ENCODE measurements at regions of chr17 and their contacts with region 1.

Region 1: GRCh38 chr17:42541041-42541833 is 5.2 kb downstream of the NAGLU start:
- DNase-seq: peak; percentile 64
- ATAC-seq: peak; percentile 37
- H3K4me3 Mint-ChIP-seq: peak overlapping the region; percentile 78
- H3K27ac Mint-ChIP-seq: peak overlapping the region; percentile 88
- H3K4me1 Mint-ChIP-seq: peaks cover 32% of the 10 kb centered on the region
- H3K27me3 Mint-ChIP-seq: no peaks in the 10 kb centered on the region

Region 2: GRCh38 chr17:42566883-42567573 is 25.8 kb after region 1 on chr17 and contains the start of gene MLX:
- POLR2A ChIA-PET with region 1: interaction called, 13 read pairs
- DNase-seq: peak; percentile 96
- ATAC-seq: peak; percentile 74
- H3K4me3 Mint-ChIP-seq: peak within 1 kb of the TSS; percentile 97
- H3K27ac Mint-ChIP-seq: peak within 1 kb of the TSS; percentile 98
- H3K4me1 Mint-ChIP-seq: peaks cover 35% of the 10 kb centered on the region
- H3K27me3 Mint-ChIP-seq: no peaks in the 10 kb centered on the region
- total RNA-seq, gene MLX: 62.9 to 64.9 TPM

Measured in activated naive CD8-positive, alpha-beta T cell treated with anti-CD3 and anti-CD28 coated beads, Interleukin-2, amount 10 ng/mL, durations not matched to agents 7 days and 5 days (primary cell).